Activated CD4-positive, alpha-beta T cell treated with anti-CD3 and anti-CD28 coated beads, Interleukin-2, amount 10 ng/mL, durations not matched to agents 24 days and 14 days (primary cell): ENCODE measurements at regions of chr5 and their contacts with region 1.

Region 1: GRCh38 chr5:76367623-76368371 is 35.3 kb upstream of the IQGAP2 start:
- DNase-seq: peak; percentile 68
- H3K4me3 Mint-ChIP-seq: no peak overlapping the region
- H3K27ac Mint-ChIP-seq: peak overlapping the region; percentile 84
- H3K4me1 Mint-ChIP-seq: peaks cover 24% of the 10 kb centered on the region
- H3K27me3 Mint-ChIP-seq: no peaks in the 10 kb centered on the region

Region 2: DNA sequence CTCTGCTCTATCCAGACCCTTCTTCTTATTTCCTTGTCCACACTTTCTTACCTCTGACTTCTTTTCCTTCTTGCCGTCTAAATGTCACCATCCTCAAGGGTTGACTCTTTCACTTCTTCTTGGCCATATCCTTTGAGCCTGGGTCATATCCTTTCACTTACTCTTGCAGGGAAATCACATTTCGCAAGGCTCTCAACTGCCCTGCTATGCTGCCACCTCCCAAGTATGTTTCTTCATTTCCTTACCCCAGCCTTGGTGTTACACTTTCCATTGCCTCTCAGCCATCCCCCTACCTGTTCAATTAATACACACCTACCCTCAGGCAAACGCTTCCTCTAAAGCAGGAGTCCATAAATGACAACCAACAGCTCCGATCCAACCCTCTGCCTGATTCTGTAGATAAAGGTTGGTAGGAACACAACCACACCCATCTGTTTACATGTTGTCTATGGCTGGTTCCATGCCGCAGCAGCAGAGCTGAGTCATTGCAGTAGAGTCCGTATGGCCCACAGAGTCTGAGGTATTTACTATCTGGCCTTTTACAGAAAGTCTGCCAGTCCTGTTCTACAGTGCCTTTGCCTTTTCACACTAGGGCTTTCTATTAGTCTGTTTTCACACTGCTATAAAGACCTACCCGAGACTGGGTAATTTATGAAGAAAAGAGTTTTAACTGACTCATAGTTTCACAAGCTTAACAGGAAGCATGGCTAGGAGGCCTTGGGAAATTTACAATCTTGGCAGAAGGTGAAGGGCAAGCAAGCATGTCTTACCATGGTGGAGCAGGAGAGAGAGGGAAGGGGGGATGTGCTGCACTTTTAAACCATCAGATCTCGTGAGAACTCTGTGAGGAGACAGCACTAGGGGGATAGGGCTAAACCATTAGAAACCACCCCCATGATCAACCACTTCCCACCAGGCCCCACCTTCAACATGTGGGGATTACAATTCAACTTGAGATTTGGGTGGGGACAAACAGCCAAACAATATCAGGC is 186.7 kb before region 1 on chr5:
- intact Hi-C with region 1: no loop called
- DNase-seq: peak; percentile 67
- H3K4me3 Mint-ChIP-seq: no peak overlapping the region
- H3K27ac Mint-ChIP-seq: no peak overlapping the region
- H3K4me1 Mint-ChIP-seq: peaks cover 6% of the 10 kb centered on the region
- H3K27me3 Mint-ChIP-seq: no peaks in the 10 kb centered on the region

Region 3: GRCh38 chr5:76331126-76331525 is 36.7 kb before region 1 on chr5:
- intact Hi-C with region 1: loop called (anchors 2 kb)
- DNase-seq: peak; percentile 84
- H3K4me3 Mint-ChIP-seq: peak overlapping the region; percentile 60
- H3K27ac Mint-ChIP-seq: peak overlapping the region; percentile 56
- H3K4me1 Mint-ChIP-seq: peaks cover 66% of the 10 kb centered on the region
- H3K27me3 Mint-ChIP-seq: no peaks in the 10 kb centered on the region